Mammary epithelial cell (primary cell): ENCODE measurements at regions of chr14 and their contacts with region 1.

Region 1: GRCh38 chr14:68248481-68249255 is 429.1 kb downstream of the RAD51B start:
- DNase-seq: peak; percentile 35
- H3K4me3 ChIP-seq: no peak overlapping the region
- H3K27ac ChIP-seq: peak overlapping the region; percentile 22
- H3K4me1 ChIP-seq: peaks cover 37% of the 10 kb centered on the region
- H3K27me3 ChIP-seq: no peaks in the 10 kb centered on the region
- CTCF ChIP-seq: peak; percentile 29 to 62

Region 2: DNA sequence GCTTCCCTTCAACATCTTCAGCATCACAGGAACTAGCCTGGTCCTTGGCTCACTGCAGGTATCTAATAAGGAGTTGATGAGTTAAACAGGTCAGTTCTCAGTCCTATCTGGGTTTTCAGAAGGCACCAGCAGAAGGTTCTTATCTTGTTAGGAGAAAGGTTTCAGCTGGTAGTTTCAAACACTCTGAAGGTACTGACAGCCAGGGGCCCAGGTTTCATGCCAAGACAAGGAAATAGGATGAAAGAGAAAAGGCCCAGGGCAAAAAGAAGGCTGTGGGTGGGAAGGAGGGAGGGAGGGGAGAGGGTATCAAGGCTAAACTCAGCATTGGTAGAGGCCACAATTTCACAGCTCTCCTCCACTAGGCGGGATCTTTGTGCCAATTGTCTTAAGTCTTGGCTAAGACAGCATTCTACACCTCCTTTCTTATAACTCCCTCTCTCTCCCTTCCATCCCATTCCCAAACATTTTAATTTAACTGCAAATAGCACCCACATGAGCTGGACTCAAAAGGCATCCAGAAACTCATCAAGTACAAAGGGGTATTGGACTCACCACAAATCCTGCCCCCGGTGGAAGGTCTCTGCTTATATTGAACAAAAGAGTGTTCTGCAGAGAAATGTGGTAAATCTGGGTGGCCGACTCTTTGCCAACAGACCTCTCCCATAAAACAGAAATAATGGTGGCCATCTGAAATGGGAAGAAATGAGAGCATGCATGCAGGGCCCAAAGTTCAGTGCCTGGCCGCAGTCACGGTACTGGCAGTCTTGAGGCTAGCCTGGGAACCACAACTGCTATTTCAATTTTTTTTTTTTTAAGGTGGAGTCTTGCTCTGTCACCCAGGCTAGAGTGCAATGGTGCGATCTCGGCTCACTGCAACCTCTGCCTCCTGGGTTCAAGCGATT is 781.2 kb before region 1 on chr14:
- CTCF ChIA-PET with region 1: no interaction called
- dilution Hi-C with region 1: no loop called
- in situ Hi-C with region 1: no loop called
- intact Hi-C with region 1: no loop called
- DNase-seq: no peak
- H3K4me3 ChIP-seq: no peak overlapping the region
- H3K27ac ChIP-seq: no peak overlapping the region
- H3K4me1 ChIP-seq: no peaks in the 10 kb centered on the region
- H3K27me3 ChIP-seq: no peaks in the 10 kb centered on the region
- CTCF ChIP-seq: peak; percentile 5 to 40

Region 3: DNA sequence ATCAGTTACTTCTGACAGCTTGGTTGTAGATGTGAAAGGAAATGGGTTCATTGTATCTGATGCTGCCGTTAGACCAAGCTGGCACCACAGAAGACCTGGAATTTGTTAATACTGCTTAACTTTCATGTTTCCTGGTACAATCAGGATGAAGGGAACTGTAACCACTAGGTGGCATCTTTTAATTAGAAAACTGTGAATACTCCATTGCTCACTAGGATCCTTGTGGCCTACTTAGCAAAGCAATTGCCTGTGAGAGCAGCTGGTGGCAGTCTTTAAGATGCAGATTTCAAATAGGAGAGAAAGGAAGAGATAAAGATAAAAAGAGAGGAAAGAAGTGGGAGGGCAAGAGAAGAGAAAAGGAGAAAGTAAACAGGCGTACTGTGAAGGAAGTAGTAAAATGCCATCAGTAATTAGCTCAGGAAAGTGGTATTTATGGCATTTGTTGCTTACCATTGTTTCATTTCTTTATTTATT is 314.6 kb before region 1 on chr14:
- CTCF ChIA-PET with region 1: no interaction called
- dilution Hi-C with region 1: loop called (anchors 25 kb)
- in situ Hi-C with region 1: loop called in 1 of 2 experiments (anchors 10 kb)
- intact Hi-C with region 1: loop called (anchors 2 kb)
- DNase-seq: peak; percentile 68
- H3K4me3 ChIP-seq: no peak overlapping the region
- H3K27ac ChIP-seq: no peak overlapping the region
- H3K4me1 ChIP-seq: no peaks in the 10 kb centered on the region
- H3K27me3 ChIP-seq: no peaks in the 10 kb centered on the region
- CTCF ChIP-seq: peak; percentile 61 to 74

Region 4: DNA sequence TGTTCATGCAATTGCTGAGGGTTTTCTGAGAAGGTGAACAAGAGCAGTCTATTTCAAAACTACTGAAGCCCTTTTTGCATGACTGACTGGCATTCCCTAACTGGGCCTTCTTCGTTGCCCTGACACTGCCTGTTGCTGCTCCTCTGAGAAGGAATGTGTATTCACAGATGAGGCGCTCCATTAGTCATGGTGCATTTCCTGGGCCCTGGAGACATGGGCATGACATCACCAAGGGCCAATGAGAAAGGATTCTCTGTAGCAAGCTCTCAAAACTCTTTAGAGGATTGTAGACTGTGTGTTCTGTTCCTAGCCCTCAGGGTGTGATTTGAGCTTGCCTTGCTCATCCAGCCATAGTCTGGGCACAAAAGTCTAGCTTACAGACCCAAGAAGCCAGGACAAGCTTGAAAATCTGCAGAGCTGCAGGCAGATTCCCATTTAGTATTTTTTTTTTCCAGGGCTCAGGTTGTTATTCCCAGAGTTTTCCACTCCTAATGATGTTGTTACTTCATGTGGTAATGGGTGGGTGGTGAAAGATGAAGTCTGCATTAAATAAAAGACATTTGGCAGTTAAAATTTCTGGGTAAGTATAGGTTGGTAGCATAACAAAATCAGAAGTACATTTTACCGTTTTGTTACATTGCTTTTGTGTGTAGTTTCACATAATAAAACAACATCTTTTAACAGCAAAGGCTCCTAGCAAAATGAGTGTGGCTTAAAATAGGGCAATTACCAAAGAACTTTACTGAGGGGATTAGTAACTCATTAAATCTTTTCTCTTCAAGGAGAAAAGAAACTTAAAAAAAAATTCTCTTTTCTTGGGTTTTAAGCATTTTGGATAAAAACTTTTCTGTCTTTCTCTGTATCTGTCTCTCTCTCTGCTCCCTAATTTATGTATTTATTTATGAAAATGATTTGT is 110.7 kb before region 1 on chr14:
- CTCF ChIA-PET with region 1: no interaction called
- dilution Hi-C with region 1: no loop called
- in situ Hi-C with region 1: no loop called
- intact Hi-C with region 1: loop called (anchors 5 kb)
- DNase-seq: peak; percentile 99
- H3K4me3 ChIP-seq: no peak overlapping the region
- H3K27ac ChIP-seq: peak overlapping the region; percentile 99
- H3K4me1 ChIP-seq: peaks cover 63% of the 10 kb centered on the region
- H3K27me3 ChIP-seq: no peaks in the 10 kb centered on the region
- CTCF ChIP-seq: no peak

Region 5: GRCh38 chr14:68232300-68233055 is 16.2 kb before region 1 on chr14:
- CTCF ChIA-PET with region 1: no interaction called
- dilution Hi-C with region 1: no loop called
- in situ Hi-C with region 1: no loop called
- intact Hi-C with region 1: no loop called
- DNase-seq: peak; percentile 99
- H3K4me3 ChIP-seq: no peak overlapping the region
- H3K27ac ChIP-seq: peak overlapping the region; percentile 92
- H3K4me1 ChIP-seq: peaks cover 38% of the 10 kb centered on the region
- H3K27me3 ChIP-seq: no peaks in the 10 kb centered on the region
- CTCF ChIP-seq: no peak

Region 6: GRCh38 chr14:68548194-68549056 is 299.8 kb after region 1 on chr14:
- CTCF ChIA-PET with region 1: no interaction called
- dilution Hi-C with region 1: no loop called
- in situ Hi-C with region 1: no loop called
- intact Hi-C with region 1: loop called (anchors 1 kb)
- DNase-seq: peak; percentile 98
- H3K4me3 ChIP-seq: no peak overlapping the region
- H3K27ac ChIP-seq: peak overlapping the region; percentile 98
- H3K4me1 ChIP-seq: peaks cover 86% of the 10 kb centered on the region
- H3K27me3 ChIP-seq: no peaks in the 10 kb centered on the region
- CTCF ChIP-seq: no peak

Region 7: DNA sequence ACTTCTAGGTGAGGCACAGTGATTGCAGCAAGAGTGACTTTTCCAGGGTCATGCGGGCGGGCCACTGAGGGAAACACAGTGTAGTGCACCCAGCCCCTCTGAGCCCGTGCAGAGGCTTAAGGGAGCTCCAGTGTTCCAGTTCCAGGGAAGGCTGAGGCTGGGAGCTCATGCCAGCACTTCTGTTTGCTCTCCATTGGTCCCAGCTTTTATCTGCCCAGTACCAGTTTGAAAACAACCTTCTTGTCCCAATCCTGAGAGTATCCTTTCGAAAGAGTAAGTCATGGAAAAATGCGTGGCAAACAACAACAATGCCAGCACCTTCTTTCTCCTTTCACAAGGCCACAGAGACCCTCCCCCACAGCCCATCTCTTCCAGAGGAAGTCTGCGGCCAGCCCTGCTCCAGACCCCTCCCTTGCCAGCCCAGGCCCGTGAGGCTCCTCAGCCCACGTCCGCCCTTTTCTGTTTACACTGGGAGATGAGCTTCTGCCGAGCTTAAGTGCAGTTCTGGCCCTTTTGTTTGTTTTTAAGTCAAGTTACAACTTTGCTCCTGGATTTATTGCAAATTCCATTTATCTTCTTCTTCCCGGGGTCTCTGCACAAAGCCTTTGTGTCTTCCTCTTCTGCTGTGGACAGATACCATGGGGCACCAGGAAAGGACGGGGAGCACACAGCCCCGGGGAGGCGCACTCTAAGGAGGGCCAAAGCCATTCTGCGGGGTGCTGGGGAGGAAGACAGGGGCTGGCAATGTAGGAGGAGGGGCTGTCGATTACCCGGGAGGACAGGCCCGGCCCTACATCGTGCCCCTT is 358.6 kb after region 1 on chr14:
- CTCF ChIA-PET with region 1: no interaction called
- dilution Hi-C with region 1: no loop called
- in situ Hi-C with region 1: no loop called
- intact Hi-C with region 1: no loop called
- DNase-seq: no peak
- H3K4me3 ChIP-seq: no peak overlapping the region
- H3K27ac ChIP-seq: no peak overlapping the region
- H3K4me1 ChIP-seq: peaks cover 5% of the 10 kb centered on the region
- H3K27me3 ChIP-seq: no peaks in the 10 kb centered on the region
- CTCF ChIP-seq: no peak

Region 8: DNA sequence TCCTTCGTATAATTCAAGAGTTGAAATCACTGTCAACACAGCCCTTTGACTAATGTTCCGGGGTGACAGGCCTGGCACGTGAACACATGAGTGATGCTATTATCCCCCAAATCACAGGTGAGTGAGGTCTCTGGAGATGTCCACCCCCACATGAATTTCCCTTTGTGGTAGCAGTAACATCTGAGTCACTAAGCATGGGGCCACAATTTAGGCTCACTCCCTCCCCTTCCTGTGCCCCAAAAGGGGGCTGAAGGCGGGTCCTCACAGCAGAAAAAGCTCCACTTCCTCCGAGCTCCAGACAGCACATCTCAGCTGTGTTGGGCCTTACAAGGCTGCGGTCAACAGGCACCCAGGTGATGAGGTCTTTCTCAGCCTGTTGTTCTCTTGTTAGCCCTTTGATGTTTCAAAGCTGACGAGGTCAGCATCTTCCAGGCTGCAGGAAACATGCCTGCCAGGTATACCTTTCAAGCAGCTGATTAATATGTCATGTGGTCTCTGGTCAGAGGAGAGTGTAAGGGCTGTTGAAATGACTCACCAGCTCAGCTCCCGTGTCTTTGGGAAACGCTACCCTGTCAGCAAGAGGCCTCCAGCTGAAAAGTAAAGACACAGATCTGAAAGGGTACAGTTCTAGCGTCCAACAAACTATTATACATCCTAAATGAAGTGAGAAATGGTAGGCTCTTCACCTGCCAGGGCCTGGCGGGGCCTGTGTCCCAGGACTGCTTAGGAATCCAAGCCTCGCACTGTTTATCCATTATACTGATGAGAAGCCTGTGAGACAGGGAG is 436.9 kb after region 1 on chr14:
- CTCF ChIA-PET with region 1: no interaction called
- dilution Hi-C with region 1: no loop called
- in situ Hi-C with region 1: loop called in 1 of 2 experiments (anchors 10 kb)
- intact Hi-C with region 1: no loop called
- DNase-seq: peak; percentile 99
- H3K4me3 ChIP-seq: no peak overlapping the region
- H3K27ac ChIP-seq: peak overlapping the region; percentile 96
- H3K4me1 ChIP-seq: peaks cover 77% of the 10 kb centered on the region
- H3K27me3 ChIP-seq: no peaks in the 10 kb centered on the region
- CTCF ChIP-seq: no peak